Activated T-helper 1 cell treated with anti-CD3 and anti-CD28 coated beads, Interleukin-12 subunit alpha, Interleukin-12 subunit beta, Interleukin-2, Interleukin-4 antibody, amounts not matched to agents 30 ng/mL and 10 ng/mL and 1 ng/mL, durations not matched to agents 14 hours and 24 hours and 36 hours (primary cell): ENCODE measurements at regions of chr14 and their contacts with region 1.

Region 1: DNA sequence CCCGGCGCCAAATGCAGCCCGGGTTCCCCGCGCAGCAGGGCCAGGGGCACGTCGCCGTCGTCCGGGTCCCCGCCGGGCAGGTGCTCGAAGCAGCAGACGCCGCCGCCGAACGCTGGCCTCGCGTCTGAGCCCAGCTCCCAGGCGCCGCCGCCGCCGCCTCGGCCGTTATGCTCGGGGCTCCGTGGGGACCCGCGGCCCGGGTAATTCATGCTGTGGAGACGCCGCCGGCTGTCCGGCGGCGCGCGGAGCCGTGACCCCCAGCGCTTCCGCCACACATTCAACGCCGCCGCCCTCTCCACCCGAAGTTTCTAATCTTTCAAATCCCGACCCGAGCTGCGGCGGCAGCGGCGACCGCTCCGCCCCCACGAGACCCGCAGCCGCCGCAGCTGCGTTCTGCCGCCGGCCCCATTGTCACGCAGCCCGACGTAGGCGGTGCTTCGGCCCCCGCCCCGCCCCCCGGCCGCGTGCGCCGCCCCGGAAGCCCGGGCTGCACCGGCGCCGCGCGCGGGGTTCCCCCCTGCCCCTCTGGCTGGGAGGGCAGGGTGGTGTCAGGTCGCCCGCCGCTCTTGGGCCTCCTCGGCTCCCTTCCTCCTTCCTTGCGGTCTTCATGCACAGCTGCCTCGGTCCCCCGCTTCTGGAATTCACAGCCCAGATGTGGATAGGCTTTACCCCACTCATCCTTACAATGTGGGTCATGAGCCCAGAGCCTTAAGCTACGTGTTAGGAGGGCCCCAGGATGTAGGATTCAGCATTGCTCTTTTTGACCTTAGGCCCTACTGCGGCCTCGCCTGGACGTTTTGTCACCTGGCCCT is at the start of gene DDHD1:
- DNase-seq: peak; percentile 83
- H3K4me3 Mint-ChIP-seq: peak within 1 kb of the TSS; percentile 100
- H3K27ac Mint-ChIP-seq: peak within 1 kb of the TSS; percentile 99
- H3K4me1 Mint-ChIP-seq: peaks cover 53% of the 10 kb centered on the region
- H3K27me3 Mint-ChIP-seq: peaks cover 2% of the 10 kb centered on the region
- total RNA-seq, gene DDHD1: 85.5 and 93.1 TPM in 2 replicates

Region 2: DNA sequence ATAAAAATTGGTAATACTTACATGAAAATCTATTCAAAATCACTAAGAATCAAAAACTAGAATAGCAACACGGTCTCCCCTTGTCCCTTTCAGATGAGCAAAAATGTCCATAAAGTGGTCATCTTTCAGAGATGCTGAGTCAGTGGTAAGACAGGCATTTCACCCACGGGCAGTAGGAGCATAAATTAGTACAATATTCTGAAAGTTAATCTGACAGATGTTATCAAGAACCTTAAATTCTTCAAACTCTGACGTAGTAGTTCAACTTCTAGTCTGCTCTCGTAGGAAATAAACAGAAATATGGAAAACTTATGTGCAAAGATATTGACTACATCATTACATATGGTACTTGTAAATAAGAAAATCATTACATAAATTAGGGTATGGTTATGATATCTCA is 328.6 kb before region 1 on chr14:
- intact Hi-C with region 1: no loop called
- DNase-seq: no peak
- H3K4me3 Mint-ChIP-seq: no peak overlapping the region
- H3K27ac Mint-ChIP-seq: no peak overlapping the region
- H3K4me1 Mint-ChIP-seq: no peaks in the 10 kb centered on the region
- H3K27me3 Mint-ChIP-seq: peaks cover 14% of the 10 kb centered on the region

Region 3: GRCh38 chr14:52918486-52918885 is 234.6 kb before region 1 on chr14:
- intact Hi-C with region 1: loop called (anchors 1 kb)
- DNase-seq: peak; percentile 33
- H3K4me3 Mint-ChIP-seq: no peak overlapping the region
- H3K27ac Mint-ChIP-seq: peak overlapping the region; percentile 50
- H3K4me1 Mint-ChIP-seq: peaks cover 36% of the 10 kb centered on the region
- H3K27me3 Mint-ChIP-seq: no peaks in the 10 kb centered on the region

Region 4: DNA sequence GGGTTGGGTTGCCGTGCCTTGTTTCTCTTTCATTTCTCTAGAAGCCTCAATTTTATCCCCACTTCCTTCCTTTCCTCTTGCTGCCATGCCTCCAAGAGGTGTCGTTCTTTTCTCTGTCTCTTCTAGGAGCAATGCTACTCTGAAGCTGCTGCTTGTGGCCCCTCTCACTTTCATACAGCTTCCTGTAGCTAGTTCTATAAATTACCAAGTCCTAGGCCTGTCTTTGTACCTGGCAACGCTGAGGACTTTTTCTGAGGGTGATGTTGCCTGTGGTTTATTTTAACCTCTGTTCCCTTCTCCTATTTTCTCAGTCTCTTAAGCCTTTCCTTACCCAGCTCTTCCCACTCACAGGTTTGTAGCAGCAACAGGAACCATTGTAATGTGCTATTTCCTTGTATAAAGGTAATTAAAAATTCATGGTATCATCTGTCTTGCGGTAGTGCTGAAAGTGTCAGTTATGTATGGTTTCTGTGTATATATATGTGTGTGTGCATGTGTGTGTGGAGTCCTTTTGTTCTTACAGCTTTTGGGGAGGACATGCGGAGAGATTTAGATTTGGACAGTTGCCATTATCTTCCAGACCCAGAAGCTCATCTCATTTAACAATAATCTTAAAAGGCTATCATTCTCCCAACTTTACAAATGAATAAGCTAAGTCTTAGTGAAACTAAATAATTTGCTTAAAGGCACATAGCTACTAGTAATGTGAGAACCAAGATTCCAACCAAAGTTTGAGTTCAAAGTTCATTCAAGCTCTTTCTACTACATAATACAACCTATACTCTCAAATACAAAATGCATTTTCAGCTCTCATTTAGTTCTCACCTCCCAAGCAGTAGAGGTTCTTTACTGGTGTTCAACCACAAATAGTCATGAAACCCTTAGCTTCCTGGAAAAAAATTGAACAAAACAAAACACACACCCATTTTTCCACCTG is 43.7 kb before region 1 on chr14:
- intact Hi-C with region 1: loop called (anchors 1 kb)
- DNase-seq: peak; percentile 66
- H3K4me3 Mint-ChIP-seq: no peak overlapping the region
- H3K27ac Mint-ChIP-seq: no peak overlapping the region
- H3K4me1 Mint-ChIP-seq: peaks cover 33% of the 10 kb centered on the region
- H3K27me3 Mint-ChIP-seq: no peaks in the 10 kb centered on the region

Region 5: DNA sequence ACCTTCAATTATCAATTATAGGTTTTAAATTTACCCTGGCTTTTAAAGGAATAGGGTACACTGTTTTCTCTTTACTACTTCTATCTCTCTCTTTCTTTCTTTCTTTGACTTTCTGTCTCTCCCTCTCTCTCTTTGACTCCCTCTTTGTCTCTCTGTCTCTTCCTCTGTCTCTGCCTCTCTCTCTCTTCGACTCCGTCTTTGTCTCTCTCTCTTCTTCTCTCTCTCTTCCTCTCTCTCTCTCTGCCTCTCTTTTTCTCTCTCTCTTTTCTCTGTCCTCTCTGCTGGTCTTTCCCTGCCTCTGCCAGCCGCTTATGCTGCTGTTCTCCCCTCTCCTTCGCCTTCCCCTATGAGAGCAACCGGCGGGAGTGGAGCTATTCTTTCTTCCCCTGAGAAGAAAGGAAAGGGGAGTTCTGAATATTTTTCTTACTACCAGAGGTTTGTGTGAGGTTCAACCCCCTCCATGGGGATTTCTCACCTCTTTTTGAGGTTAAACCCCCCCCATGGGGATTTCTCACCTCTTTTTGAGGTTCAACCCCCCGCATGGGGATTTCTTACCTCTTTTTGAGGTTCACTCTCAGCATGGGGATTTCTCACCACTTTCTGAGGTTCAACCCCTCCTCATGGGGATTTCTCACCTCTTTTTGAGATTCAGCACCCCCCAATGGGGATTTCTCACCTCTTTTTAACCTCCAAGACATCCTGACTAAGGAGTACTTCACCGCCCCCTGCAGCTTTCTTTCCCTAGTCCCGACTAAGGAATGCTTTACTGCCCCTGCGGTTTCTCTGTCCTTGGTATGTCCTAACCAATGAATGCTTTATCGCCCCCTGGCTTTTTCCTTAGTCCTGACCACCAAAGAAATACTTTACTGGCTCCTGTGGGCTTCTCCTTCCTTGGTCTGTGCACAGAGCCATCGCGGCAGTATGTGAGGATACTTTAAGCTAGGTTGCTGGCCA is 27.4 kb after region 1 on chr14:
- intact Hi-C with region 1: loop called (anchors 1 kb)
- DNase-seq: peak; percentile 65
- H3K4me3 Mint-ChIP-seq: peak overlapping the region; percentile 45
- H3K27ac Mint-ChIP-seq: peak overlapping the region; percentile 67
- H3K4me1 Mint-ChIP-seq: peaks cover 58% of the 10 kb centered on the region
- H3K27me3 Mint-ChIP-seq: peaks cover 4% of the 10 kb centered on the region

Region 6: GRCh38 chr14:53217295-53217994 is 64.3 kb after region 1 on chr14:
- intact Hi-C with region 1: loop called (anchors 1 kb)
- DNase-seq: peak; percentile 70
- H3K4me3 Mint-ChIP-seq: peak overlapping the region; percentile 85
- H3K27ac Mint-ChIP-seq: peak overlapping the region; percentile 59
- H3K4me1 Mint-ChIP-seq: peaks cover 6% of the 10 kb centered on the region
- H3K27me3 Mint-ChIP-seq: no peaks in the 10 kb centered on the region

Region 7: DNA sequence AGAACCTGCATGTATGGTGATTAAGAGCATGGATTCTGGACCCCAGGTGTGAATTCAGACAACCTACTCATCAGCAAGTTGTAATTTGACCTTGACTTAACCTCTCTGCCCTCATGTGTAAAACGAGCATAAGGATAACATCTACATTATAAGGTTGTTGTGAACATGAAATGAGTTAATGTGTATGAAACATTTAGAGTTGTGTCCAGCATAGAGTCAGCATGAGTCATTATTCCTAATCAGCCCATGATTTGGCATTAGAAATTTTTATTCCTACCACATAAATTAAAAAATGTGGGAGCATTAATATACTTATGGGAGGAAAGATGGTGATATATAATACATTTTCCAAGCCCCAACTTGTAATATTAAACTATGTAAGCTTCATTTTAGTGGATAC is 96.0 kb after region 1 on chr14:
- intact Hi-C with region 1: no loop called
- DNase-seq: no peak
- H3K4me3 Mint-ChIP-seq: no peak overlapping the region
- H3K27ac Mint-ChIP-seq: no peak overlapping the region
- H3K4me1 Mint-ChIP-seq: no peaks in the 10 kb centered on the region
- H3K27me3 Mint-ChIP-seq: peaks cover 7% of the 10 kb centered on the region

Region 8: DNA sequence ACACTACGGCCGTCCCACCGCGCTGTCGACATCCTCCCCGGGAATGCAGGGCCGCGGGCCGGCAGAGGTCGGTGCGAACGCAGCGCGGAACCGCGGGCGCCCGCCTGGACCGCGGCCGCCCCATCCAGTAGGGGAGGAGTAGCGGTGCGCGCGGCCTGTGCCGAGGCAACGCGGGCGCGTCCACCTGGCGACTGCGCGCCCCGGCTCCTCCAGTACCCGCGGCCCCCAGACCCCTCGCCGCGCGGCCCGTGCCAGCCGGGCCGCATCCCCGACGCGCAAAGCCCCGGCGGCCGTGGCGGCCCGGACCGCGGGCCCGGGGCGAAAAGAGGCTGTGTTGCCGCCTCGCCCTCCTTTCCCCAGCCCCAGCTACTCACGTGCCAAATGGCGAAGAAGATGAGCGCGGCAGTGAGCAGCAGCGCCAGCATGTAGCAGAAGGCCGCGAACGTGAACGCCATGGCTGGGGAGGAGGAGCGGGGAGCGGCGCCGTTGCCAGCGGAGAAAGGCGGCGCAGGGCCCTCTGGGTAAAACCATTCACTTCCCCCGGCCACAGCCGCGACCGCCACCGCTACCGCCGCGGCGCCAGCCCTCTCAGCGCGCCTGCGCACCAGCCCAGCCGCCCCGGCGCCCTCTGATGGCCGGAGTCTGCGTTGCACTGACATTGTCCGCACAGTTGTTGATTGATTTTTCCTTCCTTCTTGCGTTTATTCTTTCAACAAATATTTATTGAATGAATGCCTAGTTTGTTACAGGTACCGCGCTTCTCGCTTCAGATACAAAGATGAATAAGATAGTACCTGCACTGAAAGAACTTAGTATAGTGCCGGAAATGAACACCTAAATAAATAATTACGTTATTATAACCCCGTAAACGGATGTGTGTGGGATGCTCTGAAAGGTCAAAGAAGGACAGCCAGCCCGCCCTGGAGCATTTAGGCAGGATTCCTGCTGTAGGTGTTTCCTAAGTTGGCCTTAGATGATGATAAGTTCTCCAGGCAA is 1288.1 kb after region 1 on chr14 and contains the start of gene CNIH1:
- intact Hi-C with region 1: loop called (anchors 1 kb)
- DNase-seq: peak; percentile 91
- H3K4me3 Mint-ChIP-seq: peak within 1 kb of the TSS; percentile 89
- H3K27ac Mint-ChIP-seq: peak within 1 kb of the TSS; percentile 93
- H3K4me1 Mint-ChIP-seq: peaks cover 45% of the 10 kb centered on the region
- H3K27me3 Mint-ChIP-seq: peaks cover 2% of the 10 kb centered on the region
- total RNA-seq, gene CNIH1: 105 and 109 TPM in 2 replicates